Caco-2 (cell line): ENCODE measurements at regions of chr5 and their contacts with region 1.

Region 1: DNA sequence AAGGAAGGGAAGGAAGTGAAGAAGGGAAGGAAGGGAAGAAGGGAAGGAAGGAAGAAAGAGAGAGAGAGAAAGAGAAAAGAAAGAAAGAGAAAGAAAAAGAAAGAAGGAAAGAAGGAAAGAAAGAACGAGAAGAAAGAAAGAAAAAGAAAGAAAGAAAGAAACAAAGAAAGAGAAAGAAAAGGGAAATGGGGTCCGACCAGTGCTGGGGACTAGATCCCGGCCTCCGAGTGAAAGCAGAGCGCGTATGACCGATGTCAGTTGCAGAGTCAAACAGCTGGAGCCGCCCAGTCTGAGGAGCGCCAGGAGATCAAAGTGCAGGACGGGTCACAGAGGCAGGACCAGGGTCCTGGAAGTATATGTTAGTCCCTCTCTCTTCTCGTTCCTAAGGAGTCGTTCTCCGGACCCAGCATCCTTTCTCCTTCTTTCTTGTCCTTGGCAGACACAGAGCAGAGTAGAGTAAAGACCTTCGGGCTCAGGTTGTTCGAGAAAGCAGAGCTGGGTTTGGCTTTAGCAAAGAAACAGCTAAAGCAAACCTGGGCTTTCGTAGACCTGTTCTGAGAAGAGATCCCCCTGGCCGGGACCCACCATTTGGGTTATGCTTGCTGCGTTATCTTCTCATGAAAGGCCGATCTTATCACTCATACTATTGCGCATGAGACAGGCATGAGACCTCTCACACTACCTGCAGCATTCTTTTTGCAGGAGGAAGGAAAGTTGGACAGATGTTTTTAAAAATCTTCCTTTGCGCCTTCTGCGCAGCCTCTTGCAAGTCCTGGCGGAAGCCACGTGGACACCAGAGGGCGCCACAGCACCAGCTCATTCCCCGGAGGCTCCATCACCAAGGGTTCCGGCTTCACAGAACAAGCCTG is 305.2 kb upstream of the MSX2 start:
- DNase-seq: peak; percentile 93 to 94
- H3K4me3 ChIP-seq: peak overlapping the region; percentile 30
- H3K4me3 Mint-ChIP-seq: peak overlapping the region; percentile 75
- H3K27ac Mint-ChIP-seq: peak overlapping the region; percentile 54
- H3K4me1 ChIP-seq: peaks cover 5% of the 10 kb centered on the region
- H3K4me1 Mint-ChIP-seq: peaks cover 22% of the 10 kb centered on the region
- H3K27me3 ChIP-seq: no peaks in the 10 kb centered on the region
- H3K27me3 Mint-ChIP-seq: no peaks in the 10 kb centered on the region
- CTCF ChIP-seq: peak; percentile 94 to 97

Region 2: GRCh38 chr5:174303437-174304045 is 115.6 kb before region 1 on chr5:
- CTCF ChIA-PET with region 1: no interaction called
- POLR2A ChIA-PET with region 1: no interaction called
- intact Hi-C with region 1: no loop called
- DNase-seq: no peak
- H3K4me3 ChIP-seq: no peak overlapping the region
- H3K4me3 Mint-ChIP-seq: no peak overlapping the region
- H3K27ac Mint-ChIP-seq: no peak overlapping the region
- H3K4me1 ChIP-seq: no peaks in the 10 kb centered on the region
- H3K4me1 Mint-ChIP-seq: no peaks in the 10 kb centered on the region
- H3K27me3 ChIP-seq: no peaks in the 10 kb centered on the region
- H3K27me3 Mint-ChIP-seq: peaks cover 43% of the 10 kb centered on the region
- CTCF ChIP-seq: no peak

Region 3: DNA sequence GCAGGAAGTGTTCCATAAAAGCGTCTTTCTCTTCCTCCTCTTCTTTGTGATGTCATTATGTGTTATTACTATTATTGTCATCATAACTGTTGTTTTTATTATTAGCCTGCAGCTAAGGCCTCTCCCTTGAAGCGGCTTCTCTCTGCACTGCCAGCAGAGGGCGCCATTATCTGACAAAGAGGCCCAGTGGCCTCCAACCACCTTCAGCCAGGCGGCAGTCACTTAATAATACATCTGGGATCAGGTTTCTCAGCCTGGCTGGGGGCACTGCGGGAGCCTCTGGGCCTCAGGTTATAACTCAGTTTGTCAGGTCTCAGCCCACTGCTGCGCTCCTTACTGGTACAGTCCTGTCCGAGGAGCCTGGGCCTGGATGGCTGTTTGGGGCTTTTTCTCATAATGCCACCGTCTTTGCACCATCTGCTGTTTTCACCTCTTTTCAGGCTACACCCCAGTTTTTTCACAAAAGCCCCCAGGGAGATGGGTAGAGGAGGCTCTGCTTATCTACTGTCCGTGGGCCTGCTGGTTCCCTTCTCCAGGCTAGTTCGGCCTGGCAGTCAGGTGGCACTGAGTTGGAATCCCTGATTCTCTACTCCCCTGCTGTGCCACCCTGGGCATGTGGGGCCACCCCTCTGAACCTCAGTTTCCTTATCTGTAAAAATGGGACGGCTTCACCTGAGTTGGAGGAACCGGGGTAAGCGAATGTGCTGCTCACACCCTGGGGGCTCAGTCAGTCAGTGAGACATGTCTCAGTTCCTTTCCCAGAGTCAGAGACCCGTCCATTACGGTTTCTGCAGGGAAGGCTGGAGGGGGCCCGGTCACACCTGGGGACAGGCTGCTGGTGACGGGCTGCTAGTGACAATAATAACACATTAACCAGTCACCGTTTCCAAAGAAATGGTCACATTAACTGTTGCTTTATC is 91.6 kb before region 1 on chr5:
- CTCF ChIA-PET with region 1: interaction called, 16 read pairs
- POLR2A ChIA-PET with region 1: no interaction called
- intact Hi-C with region 1: loop called (anchors 1 kb)
- DNase-seq: peak; percentile 88 to 89
- H3K4me3 ChIP-seq: no peak overlapping the region
- H3K4me3 Mint-ChIP-seq: no peak overlapping the region
- H3K27ac Mint-ChIP-seq: no peak overlapping the region
- H3K4me1 ChIP-seq: peaks cover 12% of the 10 kb centered on the region
- H3K4me1 Mint-ChIP-seq: peaks cover 21% of the 10 kb centered on the region
- H3K27me3 ChIP-seq: no peaks in the 10 kb centered on the region
- H3K27me3 Mint-ChIP-seq: peaks cover 8% of the 10 kb centered on the region
- CTCF ChIP-seq: peak; percentile 92 to 96

Region 4: GRCh38 chr5:174409070-174409469 is 10.1 kb before region 1 on chr5:
- CTCF ChIA-PET with region 1: interaction called, 11 read pairs
- POLR2A ChIA-PET with region 1: no interaction called
- intact Hi-C with region 1: no loop called
- DNase-seq: peak in 1 of 2 experiments; percentile 29
- H3K4me3 ChIP-seq: no peak overlapping the region
- H3K4me3 Mint-ChIP-seq: no peak overlapping the region
- H3K27ac Mint-ChIP-seq: no peak overlapping the region
- H3K4me1 ChIP-seq: peaks cover 5% of the 10 kb centered on the region; the same call in 1 of the 2 replicates
- H3K4me1 Mint-ChIP-seq: peaks cover 8% of the 10 kb centered on the region
- H3K27me3 ChIP-seq: no peaks in the 10 kb centered on the region; the same call in 1 of the 2 replicates
- H3K27me3 Mint-ChIP-seq: peaks cover 13% of the 10 kb centered on the region
- CTCF ChIP-seq: peak in 1 of 2 experiments; percentile 22

Region 5: DNA sequence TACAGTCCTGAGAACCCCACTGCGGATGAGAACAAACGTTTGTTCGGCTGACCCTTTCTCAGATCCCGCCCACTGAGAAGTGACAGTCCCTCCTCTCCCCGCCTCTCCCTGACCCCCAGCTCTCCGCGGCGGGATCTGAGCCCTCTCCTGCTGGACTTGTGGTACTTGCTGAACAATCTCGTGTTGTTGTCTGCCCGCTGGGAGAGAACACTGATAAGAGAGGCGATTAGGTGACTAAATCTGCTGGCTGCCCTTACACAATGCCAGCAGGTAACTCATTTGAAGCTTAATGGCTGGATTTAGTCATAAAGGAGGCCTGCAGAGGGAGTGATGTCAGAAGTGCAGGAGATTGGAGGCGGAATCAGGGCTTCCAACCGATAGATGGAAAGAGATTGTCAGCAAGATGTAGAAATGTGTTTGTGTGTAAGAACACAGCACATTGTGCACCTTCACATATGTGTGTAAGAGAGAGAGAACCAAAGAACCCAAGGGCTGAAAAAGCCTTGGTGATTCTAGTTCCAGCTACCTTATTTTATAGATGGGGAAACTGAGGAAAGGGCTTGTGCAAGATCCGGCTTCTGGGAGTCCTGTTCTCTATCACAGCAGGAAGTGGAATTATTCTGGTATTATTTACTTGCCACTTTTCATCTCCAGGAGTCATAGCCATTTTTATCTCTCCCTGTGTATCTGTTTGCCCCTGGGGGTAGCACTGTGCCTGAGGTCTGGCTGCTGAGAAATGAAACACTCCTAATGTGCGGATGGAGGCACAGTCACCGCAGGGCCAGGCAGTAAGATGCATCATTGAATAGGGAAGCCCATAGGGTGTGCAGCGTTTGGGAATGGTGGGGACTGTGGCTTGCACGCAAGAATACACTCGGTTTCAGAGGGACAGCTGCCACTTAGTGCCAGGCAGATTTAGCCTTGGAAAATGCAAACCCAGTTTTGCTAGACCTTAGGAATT is 101.5 kb after region 1 on chr5:
- CTCF ChIA-PET with region 1: interaction called, 32 read pairs
- POLR2A ChIA-PET with region 1: no interaction called
- intact Hi-C with region 1: loop called (anchors 1 kb)
- DNase-seq: peak; percentile 94 to 97
- H3K4me3 ChIP-seq: no peak overlapping the region
- H3K4me3 Mint-ChIP-seq: peak overlapping the region; percentile 57
- H3K27ac Mint-ChIP-seq: peak overlapping the region; percentile 80
- H3K4me1 ChIP-seq: peaks cover 54% of the 10 kb centered on the region
- H3K4me1 Mint-ChIP-seq: peaks cover 39% of the 10 kb centered on the region
- H3K27me3 ChIP-seq: no peaks in the 10 kb centered on the region
- H3K27me3 Mint-ChIP-seq: no peaks in the 10 kb centered on the region
- CTCF ChIP-seq: peak in 1 of 2 experiments; percentile 32

Region 6: DNA sequence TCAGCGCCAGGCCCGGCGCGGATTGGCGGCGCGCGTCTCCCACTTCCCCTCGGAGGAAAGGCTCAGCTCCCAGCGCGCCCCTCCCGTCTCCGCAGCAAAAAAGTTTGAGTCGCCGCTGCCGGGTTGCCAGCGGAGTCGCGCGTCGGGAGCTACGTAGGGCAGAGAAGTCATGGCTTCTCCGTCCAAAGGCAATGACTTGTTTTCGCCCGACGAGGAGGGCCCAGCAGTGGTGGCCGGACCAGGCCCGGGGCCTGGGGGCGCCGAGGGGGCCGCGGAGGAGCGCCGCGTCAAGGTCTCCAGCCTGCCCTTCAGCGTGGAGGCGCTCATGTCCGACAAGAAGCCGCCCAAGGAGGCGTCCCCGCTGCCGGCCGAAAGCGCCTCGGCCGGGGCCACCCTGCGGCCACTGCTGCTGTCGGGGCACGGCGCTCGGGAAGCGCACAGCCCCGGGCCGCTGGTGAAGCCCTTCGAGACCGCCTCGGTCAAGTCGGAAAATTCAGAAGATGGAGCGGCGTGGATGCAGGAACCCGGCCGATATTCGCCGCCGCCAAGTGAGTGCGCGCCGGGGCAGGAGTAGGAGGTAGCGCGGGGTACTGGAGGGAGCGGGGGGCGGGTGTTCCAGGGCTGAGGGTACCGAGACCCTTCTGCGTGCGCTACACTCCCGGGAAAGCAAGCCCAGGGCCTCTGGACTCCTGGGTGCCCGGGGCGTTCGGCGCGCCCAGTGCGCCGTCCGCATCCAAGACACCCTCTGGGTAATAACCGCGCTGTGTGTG is 305.5 kb after region 1 on chr5 and contains the start of gene MSX2:
- CTCF ChIA-PET with region 1: interaction called, 13 read pairs
- POLR2A ChIA-PET with region 1: interaction called, 14 read pairs
- intact Hi-C with region 1: loop called (anchors 2 kb)
- DNase-seq: peak; percentile 93 to 95
- H3K4me3 ChIP-seq: peak within 1 kb of the TSS; percentile 94
- H3K4me3 Mint-ChIP-seq: peak within 1 kb of the TSS; percentile 93
- H3K27ac Mint-ChIP-seq: peak within 1 kb of the TSS; percentile 91
- H3K4me1 ChIP-seq: peaks cover 54% of the 10 kb centered on the region
- H3K4me1 Mint-ChIP-seq: peaks cover 45% of the 10 kb centered on the region
- H3K27me3 ChIP-seq: no peaks in the 10 kb centered on the region
- H3K27me3 Mint-ChIP-seq: no peaks in the 10 kb centered on the region
- CTCF ChIP-seq: no peak
- total RNA-seq, gene MSX2: 59.7 and 64.4 TPM in 2 replicates

Region 7: GRCh38 chr5:174751154-174752000 is 332.2 kb after region 1 on chr5:
- CTCF ChIA-PET with region 1: interaction called, 18 read pairs
- POLR2A ChIA-PET with region 1: no interaction called
- intact Hi-C with region 1: loop called (anchors 1 kb)
- DNase-seq: peak in 1 of 2 experiments; percentile 62
- H3K4me3 ChIP-seq: peak overlapping the region; percentile 66
- H3K4me3 Mint-ChIP-seq: peak overlapping the region; percentile 76
- H3K27ac Mint-ChIP-seq: no peak overlapping the region
- H3K4me1 ChIP-seq: no peaks in the 10 kb centered on the region
- H3K4me1 Mint-ChIP-seq: peaks cover 6% of the 10 kb centered on the region
- H3K27me3 ChIP-seq: no peaks in the 10 kb centered on the region
- H3K27me3 Mint-ChIP-seq: no peaks in the 10 kb centered on the region
- CTCF ChIP-seq: no peak

Region 8: DNA sequence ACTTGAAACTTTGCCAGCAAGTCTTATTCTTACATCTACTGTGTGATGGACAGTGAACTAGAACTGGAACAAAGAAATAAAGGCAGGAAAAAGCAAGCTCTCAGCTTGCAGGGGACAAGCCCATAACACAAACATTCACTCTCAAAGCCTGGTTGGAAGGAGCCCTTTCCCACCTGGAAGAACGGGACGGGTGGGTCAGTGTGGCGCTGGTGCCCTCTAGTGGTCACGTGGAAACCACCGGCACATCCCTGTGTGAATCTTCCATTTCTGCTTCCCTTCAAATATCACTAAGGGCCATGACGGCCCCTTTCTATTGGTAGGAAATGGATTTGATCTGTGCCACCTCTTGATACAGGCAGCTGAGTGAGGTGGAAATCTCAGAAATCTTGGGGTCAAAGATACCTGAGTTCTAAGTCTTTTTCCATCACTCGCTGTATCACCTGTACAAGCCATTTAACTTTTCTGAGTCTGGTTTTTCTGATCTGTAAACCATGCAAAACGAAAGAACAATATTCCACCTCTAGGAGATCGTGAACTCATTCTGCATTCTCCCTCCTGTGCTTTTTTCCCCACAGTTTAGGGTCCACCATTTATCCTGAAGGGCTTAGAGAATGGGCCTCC is 516.8 kb after region 1 on chr5:
- CTCF ChIA-PET with region 1: no interaction called
- POLR2A ChIA-PET with region 1: no interaction called
- intact Hi-C with region 1: loop called (anchors 10 kb)
- DNase-seq: peak; percentile 70 to 80
- H3K4me3 ChIP-seq: no peak overlapping the region
- H3K4me3 Mint-ChIP-seq: no peak overlapping the region
- H3K27ac Mint-ChIP-seq: no peak overlapping the region
- H3K4me1 ChIP-seq: no peaks in the 10 kb centered on the region
- H3K4me1 Mint-ChIP-seq: no peaks in the 10 kb centered on the region
- H3K27me3 ChIP-seq: no peaks in the 10 kb centered on the region; the same call in none of the 2 replicates
- H3K27me3 Mint-ChIP-seq: peaks cover 18% of the 10 kb centered on the region
- CTCF ChIP-seq: peak; percentile 89 to 95